Activated naive CD8-positive, alpha-beta T cell treated with anti-CD3 and anti-CD28 coated beads, Interleukin-2, amount 10 ng/mL, durations not matched to agents 7 days and 5 days (primary cell): ENCODE measurements at regions of chr7 and their contacts with region 1.

Region 1: DNA sequence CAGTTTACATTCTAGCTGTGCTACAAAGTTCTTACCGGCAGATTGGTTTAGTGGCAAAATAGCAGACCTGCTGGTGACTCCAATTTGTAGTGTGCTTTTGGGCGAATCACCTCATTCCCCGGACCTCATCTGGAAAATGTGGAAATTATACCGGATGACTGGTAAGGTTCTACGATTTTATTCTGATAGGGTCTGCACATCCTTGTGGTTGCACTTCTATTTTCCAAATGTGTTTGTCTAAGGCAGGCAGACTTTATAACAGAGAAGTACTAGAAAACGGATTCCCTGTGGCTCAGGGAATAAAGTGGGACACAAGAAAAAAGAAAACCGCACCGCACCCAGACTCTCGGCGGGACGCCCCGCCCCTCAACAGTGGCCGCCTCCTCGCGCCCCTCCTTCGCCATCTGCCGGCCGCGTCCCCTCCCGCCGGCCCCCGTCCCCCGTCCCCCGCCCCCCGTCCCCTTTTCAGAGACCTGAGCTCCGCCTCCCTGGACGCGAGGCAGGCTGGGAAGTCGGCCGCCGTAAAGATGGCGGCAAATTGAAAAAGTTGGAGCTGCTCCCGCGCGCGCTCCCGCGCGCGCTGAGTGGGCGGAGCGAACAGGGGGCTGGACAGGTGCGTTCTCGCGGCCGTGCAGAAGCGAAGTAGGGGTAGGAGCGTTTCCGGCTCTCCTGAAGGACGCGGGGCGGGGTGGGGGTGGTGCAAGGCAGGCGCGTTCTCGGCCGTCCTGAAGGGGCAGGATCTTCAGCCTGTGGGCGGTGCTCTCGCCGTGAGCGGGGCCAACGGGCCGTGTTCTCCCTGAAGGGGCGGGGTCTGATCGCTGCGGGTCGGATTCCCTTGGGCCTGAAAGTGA is 531 bp upstream of the CCM2 start:
- DNase-seq: peak; percentile 98
- ATAC-seq: peak; percentile 89
- H3K4me3 Mint-ChIP-seq: peak overlapping the region; percentile 84
- H3K27ac Mint-ChIP-seq: peak overlapping the region; percentile 92
- H3K4me1 Mint-ChIP-seq: peaks cover 39% of the 10 kb centered on the region
- H3K27me3 Mint-ChIP-seq: no peaks in the 10 kb centered on the region

Region 2: DNA sequence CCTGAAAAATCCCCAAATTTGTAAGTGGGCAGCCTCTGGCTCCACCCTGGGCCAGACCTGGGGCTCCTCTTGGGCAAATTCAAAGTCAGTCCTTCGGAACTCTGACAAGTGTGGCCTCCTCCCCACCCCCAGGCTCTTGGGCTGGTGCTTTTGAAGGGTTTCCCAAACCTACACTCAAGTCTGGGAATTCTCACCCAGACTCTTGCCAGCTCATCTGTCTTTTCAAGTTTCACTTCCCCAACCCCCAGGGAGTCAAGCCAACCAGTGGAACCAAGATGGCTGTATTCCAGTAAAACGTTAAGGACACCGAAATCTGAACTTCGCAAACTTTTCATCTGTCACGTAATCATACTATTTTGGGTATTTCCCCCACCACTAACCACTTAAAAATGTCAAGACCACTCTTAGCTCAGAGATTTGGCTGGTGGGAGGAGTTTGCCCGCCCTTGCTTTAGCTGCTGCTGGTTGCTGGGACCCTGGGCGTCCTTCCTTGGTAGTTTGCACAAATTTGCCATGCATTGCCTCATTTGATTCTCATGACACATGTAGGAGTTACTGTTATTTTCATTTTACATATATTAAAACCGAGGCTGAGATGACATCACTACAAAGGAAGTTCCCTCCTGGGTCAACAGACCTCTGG is 19.0 kb before region 1 on chr7:
- POLR2A ChIA-PET with region 1: interaction called, 202 read pairs
- DNase-seq: peak; percentile 59
- ATAC-seq: peak; percentile 10
- H3K4me3 Mint-ChIP-seq: peak overlapping the region; percentile 94
- H3K27ac Mint-ChIP-seq: peak overlapping the region; percentile 93
- H3K4me1 Mint-ChIP-seq: peaks cover 60% of the 10 kb centered on the region
- H3K27me3 Mint-ChIP-seq: no peaks in the 10 kb centered on the region

Region 3: DNA sequence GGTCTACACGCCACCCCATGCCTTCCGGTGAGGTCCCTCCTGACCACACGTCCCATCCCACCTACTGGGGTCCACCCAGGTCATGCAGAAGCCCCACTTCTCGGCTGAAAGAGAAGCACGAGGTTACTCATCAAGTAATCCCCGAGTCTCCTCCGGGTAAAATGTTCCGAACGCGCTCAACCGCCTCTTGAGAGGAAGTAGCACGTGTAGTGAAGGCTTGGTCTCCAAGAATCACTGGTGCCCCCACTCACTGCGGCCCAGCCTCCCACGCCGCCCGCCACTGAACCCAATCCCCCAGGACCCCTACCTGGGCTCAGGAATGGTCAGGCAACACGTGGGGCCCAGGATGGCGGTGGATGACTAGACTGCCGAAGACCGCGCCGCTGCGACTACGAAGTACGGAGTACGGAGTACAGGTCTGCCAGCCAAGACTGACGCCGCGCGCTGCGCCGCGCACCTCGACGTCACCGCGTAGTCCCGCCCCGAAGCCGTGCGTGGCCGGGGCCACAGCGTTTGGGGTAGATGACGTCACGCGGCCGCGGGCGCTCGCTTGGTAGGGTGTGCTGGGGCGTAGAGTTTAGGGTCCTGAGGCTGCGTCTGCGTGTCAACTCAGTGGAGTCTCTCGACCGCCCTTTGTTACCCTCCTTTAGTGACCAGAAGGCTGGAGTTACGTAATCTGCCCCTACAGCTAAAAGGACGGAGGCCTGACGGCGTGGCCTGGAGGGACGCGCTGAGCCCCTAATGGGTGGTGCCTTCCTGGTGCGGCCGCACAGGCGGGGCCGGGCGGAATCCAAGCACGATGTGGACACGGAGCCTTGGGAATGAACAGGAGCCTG is 13.0 kb before region 1 on chr7:
- POLR2A ChIA-PET with region 1: interaction called, 202 read pairs
- DNase-seq: peak; percentile 99
- ATAC-seq: peak; percentile 95
- H3K4me3 Mint-ChIP-seq: peak overlapping the region; percentile 98
- H3K27ac Mint-ChIP-seq: peak overlapping the region; percentile 98
- H3K4me1 Mint-ChIP-seq: peaks cover 44% of the 10 kb centered on the region
- H3K27me3 Mint-ChIP-seq: no peaks in the 10 kb centered on the region

Region 4: DNA sequence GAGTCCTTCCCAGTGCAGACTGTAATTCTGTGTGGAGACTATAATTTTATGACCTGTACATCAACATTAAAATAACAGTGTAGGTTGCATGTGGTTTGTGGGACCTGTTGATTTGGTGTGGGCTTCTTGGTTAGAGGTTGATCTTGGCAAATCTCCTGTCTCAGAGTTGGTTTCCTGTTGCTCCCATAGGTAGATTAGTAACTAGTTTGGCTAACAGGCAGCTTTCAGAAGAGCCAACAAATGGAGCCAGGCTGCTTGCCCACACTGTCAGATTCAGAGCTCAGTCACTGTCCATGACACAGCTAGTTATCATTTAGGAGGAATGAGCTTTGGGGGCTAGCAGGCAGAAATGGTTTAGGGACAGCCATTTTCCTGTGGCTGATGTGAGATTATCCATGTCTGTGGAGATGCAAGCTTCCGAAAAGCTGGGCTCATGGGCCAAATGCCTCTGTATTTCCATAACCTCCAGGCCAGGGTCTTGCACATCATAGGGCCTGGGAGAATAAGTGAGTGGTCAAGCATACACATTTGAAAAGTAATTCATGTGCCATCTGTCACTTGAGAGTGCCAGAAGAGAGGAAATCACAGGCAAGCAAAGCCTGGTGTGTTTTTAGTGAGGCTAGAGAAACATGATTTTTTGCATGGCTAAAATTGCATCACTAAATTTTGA is 33.9 kb after region 1 on chr7:
- POLR2A ChIA-PET with region 1: interaction called, 80 read pairs
- DNase-seq: no peak
- ATAC-seq: peak; percentile 23
- H3K4me3 Mint-ChIP-seq: peak overlapping the region; percentile 65
- H3K27ac Mint-ChIP-seq: peak overlapping the region; percentile 75
- H3K4me1 Mint-ChIP-seq: peaks cover 72% of the 10 kb centered on the region
- H3K27me3 Mint-ChIP-seq: no peaks in the 10 kb centered on the region

Region 5: DNA sequence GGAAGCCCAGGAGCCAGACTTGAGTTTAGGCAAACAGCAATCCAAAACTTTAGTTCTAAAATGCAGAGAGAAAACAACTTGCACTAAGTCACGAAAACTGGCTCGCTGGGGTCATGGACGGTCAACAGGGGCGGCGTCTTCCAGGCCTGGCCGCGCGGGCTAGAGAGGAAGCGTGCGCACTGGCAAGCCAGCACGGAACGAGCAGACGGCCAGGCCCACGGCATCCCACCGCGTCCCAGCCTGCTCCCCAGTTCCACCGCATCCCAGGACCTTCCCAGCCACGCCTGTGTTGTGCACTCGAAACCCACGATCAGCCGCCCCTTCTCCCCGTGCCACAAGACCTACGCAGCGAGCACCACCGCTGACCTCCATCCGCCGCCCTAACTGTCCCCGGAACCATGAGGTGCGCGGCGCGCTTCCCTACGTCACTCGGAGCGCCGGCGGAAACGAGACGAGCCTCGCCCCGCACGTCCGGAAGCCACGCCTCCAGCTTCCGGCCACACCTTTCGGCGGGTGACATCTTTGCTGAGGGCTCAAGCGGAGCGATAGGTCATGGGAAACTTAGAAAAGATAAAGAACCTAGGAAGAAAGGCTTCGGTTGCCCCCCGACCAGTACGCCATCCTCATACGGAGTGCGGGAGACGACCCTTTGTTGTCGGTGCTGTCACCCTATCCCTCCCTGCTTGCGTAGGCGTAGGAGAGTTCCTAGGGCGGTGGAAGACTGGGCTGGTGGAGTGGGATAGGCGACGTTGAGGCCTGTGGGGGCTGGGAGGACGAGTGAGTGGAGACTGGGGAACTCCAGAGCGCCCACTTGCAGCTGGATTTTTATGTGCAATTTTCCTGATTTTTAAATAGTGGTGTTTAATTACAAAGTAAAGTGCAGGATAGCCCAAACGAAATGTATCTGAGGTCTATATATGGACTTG is 112.1 kb after region 1 on chr7 and contains the start of gene TBRG4:
- POLR2A ChIA-PET with region 1: interaction called, 28 read pairs
- DNase-seq: peak; percentile 97
- ATAC-seq: peak; percentile 86
- H3K4me3 Mint-ChIP-seq: peak within 1 kb of the TSS; percentile 97
- H3K27ac Mint-ChIP-seq: peak within 1 kb of the TSS; percentile 94
- H3K4me1 Mint-ChIP-seq: peaks cover 35% of the 10 kb centered on the region
- H3K27me3 Mint-ChIP-seq: peaks cover 10% of the 10 kb centered on the region
- total RNA-seq, gene TBRG4: 123 to 127 TPM